Dendritic cell treated with granulocyte-macrophage colony-stimulating factor and Interleukin-4, amounts not matched to agents 40 ng/mL and 50 ng/mL, for 4 days (primary cell): ENCODE measurements at regions of chr1 and their contacts with region 1.

Region 1: GRCh38 chr1:160328184-160328583 is 14.9 kb downstream of the COPA start:
- H3K4me3 Mint-ChIP-seq: no peak overlapping the region
- H3K27ac Mint-ChIP-seq: peak overlapping the region; percentile 46
- H3K4me1 Mint-ChIP-seq: peaks cover 29% of the 10 kb centered on the region
- H3K27me3 Mint-ChIP-seq: no peaks in the 10 kb centered on the region

Region 2: GRCh38 chr1:160291248-160292220 is 36.6 kb before region 1 on chr1:
- intact Hi-C with region 1: loop called (anchors 5 kb)
- H3K4me3 Mint-ChIP-seq: no peak overlapping the region
- H3K27ac Mint-ChIP-seq: peak overlapping the region; percentile 11
- H3K4me1 Mint-ChIP-seq: peaks cover 21% of the 10 kb centered on the region
- H3K27me3 Mint-ChIP-seq: no peaks in the 10 kb centered on the region